Activated T-helper 1 cell treated with anti-CD3 and anti-CD28 coated beads, Interleukin-12 subunit alpha, Interleukin-12 subunit beta, Interleukin-2, Interleukin-4 antibody, amounts not matched to agents 30 ng/mL and 10 ng/mL and 1 ng/mL, durations not matched to agents 14 hours and 24 hours and 36 hours (primary cell): ENCODE measurements at regions of chr7 and their contacts with region 1.

Region 1: DNA sequence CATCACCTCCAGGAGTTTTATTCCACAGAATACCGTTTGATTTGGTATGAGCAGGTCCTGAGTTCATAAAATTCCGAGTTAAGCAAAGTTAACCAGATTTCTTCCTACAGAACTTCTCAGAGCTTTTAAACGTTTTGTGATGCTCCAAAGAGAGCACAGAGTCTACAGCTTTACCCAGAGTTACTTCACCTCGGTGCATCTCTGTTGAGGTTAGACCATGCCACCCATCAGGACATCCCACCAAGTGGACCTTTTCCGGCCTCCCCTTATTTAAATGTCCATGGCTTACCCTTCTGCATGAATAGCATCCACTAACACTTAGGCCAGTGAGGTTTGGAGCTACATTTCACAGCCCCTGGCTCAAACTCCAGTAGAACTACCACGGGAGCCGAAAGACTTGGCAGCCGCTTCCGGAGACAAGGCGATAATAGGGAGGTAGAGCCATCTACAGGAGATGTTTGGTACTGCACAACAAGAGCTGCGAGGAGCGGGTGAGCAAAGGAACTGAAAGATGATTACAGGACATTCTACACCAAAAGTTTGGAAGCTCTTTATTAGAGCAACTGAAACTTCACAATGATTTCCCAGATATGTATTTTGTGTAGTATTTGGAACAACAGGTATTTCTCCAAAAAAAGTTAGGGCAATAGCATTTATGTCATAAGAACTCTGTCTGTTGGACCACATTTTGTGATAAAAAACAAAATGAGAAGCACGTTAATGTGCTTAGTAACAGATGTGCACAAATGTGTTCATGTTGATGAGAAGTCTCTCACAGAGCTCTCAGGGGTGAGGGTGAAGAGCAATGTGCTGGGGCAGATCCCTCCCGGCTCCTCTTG is 174.7 kb downstream of the HERPUD2 start:
- DNase-seq: peak; percentile 47
- H3K4me3 Mint-ChIP-seq: no peak overlapping the region
- H3K27ac Mint-ChIP-seq: no peak overlapping the region
- H3K4me1 Mint-ChIP-seq: no peaks in the 10 kb centered on the region
- H3K27me3 Mint-ChIP-seq: peaks cover 13% of the 10 kb centered on the region

Region 2: GRCh38 chr7:35185907-35186731 is 334.1 kb before region 1 on chr7:
- intact Hi-C with region 1: loop called (anchors 5 kb)
- DNase-seq: no peak
- H3K4me3 Mint-ChIP-seq: peak overlapping the region; percentile 43
- H3K27ac Mint-ChIP-seq: no peak overlapping the region
- H3K4me1 Mint-ChIP-seq: peaks cover 6% of the 10 kb centered on the region
- H3K27me3 Mint-ChIP-seq: peaks cover 29% of the 10 kb centered on the region

Region 3: GRCh38 chr7:35424869-35425495 is 95.2 kb before region 1 on chr7:
- intact Hi-C with region 1: loop called (anchors 1 kb)
- DNase-seq: peak; percentile 17
- H3K4me3 Mint-ChIP-seq: no peak overlapping the region
- H3K27ac Mint-ChIP-seq: no peak overlapping the region
- H3K4me1 Mint-ChIP-seq: no peaks in the 10 kb centered on the region
- H3K27me3 Mint-ChIP-seq: peaks cover 12% of the 10 kb centered on the region

Region 4: GRCh38 chr7:35624299-35625186 is 104.4 kb after region 1 on chr7:
- intact Hi-C with region 1: loop called (anchors 5 kb)
- DNase-seq: peak; percentile 6
- H3K4me3 Mint-ChIP-seq: no peak overlapping the region
- H3K27ac Mint-ChIP-seq: no peak overlapping the region
- H3K4me1 Mint-ChIP-seq: no peaks in the 10 kb centered on the region
- H3K27me3 Mint-ChIP-seq: peaks cover 5% of the 10 kb centered on the region